Activated T-helper 2 cell treated with anti-CD3 and anti-CD28 coated beads, Interferon-gamma antibody, Interleukin-2, Interleukin-4, amounts not matched to agents 10 μg/mL and 5 μg/mL and 100 μg/mL, durations not matched to agents 14 hours and 24 hours and 36 hours (primary cell): ENCODE measurements at regions of chr4 and their contacts with region 1.

Region 1: GRCh38 chr4:119628308-119629141 is at the start of gene PDE5A:
- DNase-seq: peak; percentile 67
- H3K4me3 Mint-ChIP-seq: peak within 1 kb of the TSS; percentile 81
- H3K27ac Mint-ChIP-seq: no peak within 1 kb of the TSS
- H3K4me1 Mint-ChIP-seq: peaks cover 13% of the 10 kb centered on the region
- H3K27me3 Mint-ChIP-seq: peaks cover 54% of the 10 kb centered on the region
- total RNA-seq, gene PDE5A: 0.25 and 0.32 TPM in 2 replicates

Region 2: DNA sequence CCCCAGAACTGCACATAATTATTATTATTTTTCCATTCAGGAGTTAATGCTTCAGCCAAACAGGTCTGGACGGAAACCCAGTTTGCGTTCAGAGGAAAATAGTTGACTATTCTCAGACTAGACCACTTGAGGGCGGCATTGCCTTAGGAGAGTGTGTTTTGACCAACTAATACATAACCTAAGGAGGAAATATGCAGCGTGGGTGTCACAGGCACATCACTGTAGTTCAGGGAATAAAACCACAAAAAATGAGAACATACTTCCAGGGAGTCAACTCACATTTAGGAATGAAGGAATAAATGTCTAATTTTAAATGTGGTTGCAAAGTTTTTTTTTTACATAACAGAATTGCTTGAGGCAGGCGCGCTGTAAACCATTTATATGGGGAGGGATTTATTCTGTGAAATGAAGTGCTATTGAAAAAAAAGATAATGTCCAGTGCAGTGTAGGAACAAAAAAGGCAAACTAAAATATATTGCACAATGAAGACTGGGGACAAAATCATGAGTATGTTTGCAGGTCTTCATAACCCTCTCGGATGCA is 646.6 kb before region 1 on chr4:
- intact Hi-C with region 1: loop called (anchors 5 kb)
- DNase-seq: peak; percentile 10
- H3K4me3 Mint-ChIP-seq: no peak overlapping the region
- H3K27ac Mint-ChIP-seq: no peak overlapping the region
- H3K4me1 Mint-ChIP-seq: peaks cover 2% of the 10 kb centered on the region
- H3K27me3 Mint-ChIP-seq: peaks cover 12% of the 10 kb centered on the region

Region 3: GRCh38 chr4:119314356-119314755 is 314.2 kb before region 1 on chr4:
- intact Hi-C with region 1: loop called (anchors 2 kb)
- DNase-seq: no peak
- H3K4me3 Mint-ChIP-seq: no peak overlapping the region
- H3K27ac Mint-ChIP-seq: no peak overlapping the region
- H3K4me1 Mint-ChIP-seq: no peaks in the 10 kb centered on the region
- H3K27me3 Mint-ChIP-seq: peaks cover 38% of the 10 kb centered on the region

Region 4: GRCh38 chr4:119337010-119337409 is 291.5 kb before region 1 on chr4:
- intact Hi-C with region 1: no loop called
- DNase-seq: no peak
- H3K4me3 Mint-ChIP-seq: no peak overlapping the region
- H3K27ac Mint-ChIP-seq: no peak overlapping the region
- H3K4me1 Mint-ChIP-seq: peaks cover 2% of the 10 kb centered on the region
- H3K27me3 Mint-ChIP-seq: peaks cover 2% of the 10 kb centered on the region

Region 5: DNA sequence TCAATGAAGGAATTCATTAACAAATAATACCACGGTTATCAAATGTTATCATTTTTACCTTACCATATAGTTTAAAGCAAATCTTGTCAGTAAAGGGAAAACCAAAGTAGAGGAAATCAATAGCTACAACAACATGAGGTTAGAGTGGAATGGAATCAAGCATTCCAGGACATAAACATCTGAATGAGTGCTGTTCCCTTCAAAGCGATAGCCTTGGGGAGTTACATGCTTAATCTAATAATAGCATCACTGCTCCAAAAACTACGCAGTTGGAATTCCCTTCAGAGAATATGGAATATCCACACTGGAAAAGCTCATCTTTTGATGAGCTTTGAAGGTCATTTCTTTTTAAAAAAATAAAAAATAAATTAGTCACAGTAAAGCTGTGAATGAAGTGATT is 31.1 kb before region 1 on chr4:
- intact Hi-C with region 1: no loop called
- DNase-seq: no peak
- H3K4me3 Mint-ChIP-seq: no peak overlapping the region
- H3K27ac Mint-ChIP-seq: no peak overlapping the region
- H3K4me1 Mint-ChIP-seq: no peaks in the 10 kb centered on the region
- H3K27me3 Mint-ChIP-seq: no peaks in the 10 kb centered on the region

Region 6: DNA sequence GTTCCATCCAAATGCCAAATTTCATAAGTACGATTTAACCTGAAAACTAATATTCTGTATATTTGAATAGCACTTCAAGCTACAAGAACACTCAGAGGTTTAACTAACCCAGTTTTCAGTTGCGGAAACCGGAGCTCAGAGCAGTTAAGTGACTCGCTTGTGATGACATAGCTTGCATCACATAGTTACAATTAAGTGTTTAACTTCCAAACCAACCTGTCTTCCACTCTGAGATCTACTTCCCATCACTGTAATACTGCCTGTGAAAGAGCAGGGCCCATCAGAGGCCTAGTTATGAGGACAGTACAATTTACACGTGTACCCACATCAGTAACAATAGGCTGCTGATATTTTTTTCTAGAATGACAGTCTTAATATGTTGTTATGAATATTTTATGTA is 317.8 kb after region 1 on chr4:
- intact Hi-C with region 1: no loop called
- DNase-seq: no peak
- H3K4me3 Mint-ChIP-seq: no peak overlapping the region
- H3K27ac Mint-ChIP-seq: no peak overlapping the region
- H3K4me1 Mint-ChIP-seq: no peaks in the 10 kb centered on the region
- H3K27me3 Mint-ChIP-seq: no peaks in the 10 kb centered on the region

Region 7: GRCh38 chr4:120049732-120050494 is 421.4 kb after region 1 on chr4:
- intact Hi-C with region 1: loop called (anchors 1 kb)
- DNase-seq: peak; percentile 55
- H3K4me3 Mint-ChIP-seq: no peak overlapping the region
- H3K27ac Mint-ChIP-seq: no peak overlapping the region
- H3K4me1 Mint-ChIP-seq: peaks cover 4% of the 10 kb centered on the region
- H3K27me3 Mint-ChIP-seq: no peaks in the 10 kb centered on the region

Region 8: DNA sequence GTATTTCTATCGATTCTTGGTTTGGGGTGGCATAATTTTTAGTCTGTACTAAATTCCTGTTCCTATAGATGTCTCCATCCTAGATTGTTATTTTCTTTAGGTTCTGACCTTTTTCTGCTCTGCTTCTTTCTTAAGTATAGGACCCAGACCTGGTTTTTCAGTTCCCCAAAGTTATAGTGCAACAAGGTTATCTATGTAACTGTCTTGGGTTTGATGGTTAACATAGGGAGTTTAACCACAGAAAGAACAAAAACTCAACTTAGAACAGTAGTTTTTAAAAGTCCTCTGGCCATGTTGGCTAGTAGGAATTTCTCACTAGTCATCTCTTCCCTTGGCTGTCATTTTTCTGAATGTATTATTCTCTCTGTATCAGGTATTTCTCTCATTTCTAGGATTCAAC is 476.9 kb after region 1 on chr4:
- intact Hi-C with region 1: no loop called
- DNase-seq: no peak
- H3K4me3 Mint-ChIP-seq: no peak overlapping the region
- H3K27ac Mint-ChIP-seq: no peak overlapping the region
- H3K4me1 Mint-ChIP-seq: no peaks in the 10 kb centered on the region
- H3K27me3 Mint-ChIP-seq: peaks cover 3% of the 10 kb centered on the region